ENCODE measurements at regions of chr2 and their contacts with region 1.

Region 1: DNA sequence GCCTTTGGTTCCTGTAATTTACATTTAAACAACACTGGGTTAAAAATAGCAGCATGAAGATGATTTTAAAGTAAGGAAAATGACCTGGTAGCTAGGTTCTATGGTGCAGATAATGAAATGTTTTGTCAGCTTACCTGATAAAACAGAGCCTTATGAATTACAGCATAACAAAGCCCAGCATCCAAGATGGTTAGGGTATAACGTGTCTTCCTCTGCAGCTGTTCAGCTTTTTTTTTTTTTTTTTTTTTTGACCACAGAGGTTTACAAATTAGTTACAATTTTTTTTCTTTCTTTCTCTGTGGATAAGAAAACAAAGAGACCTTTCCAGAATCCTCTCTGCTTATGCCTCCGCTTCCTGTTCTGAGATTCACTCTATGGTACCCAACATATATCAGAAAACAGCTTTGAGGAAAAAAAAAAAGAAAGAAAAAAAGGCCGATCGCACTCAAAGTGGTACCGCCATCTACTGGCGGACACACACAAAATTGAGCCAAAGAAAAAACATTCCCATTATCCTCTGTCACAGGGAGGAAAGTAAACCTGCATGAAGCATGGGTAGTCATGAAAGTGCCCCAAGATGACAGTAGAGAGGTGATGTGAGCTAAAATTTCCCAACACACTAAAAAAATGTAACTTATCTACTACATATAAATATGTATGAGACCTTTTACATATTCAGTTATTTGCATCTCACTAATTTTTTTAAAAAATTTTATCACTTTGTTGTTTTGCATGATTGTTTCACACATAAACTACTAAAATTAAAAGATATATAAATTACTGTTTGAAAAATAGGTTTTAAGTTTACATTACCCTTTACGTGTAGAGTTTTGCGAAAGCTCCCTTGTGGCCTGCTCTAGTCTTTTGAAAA is at the start of gene SCN3A:
- DNase-seq: peak; percentile 45
- ATAC-seq: peak; percentile 37; the same call in 1 of the 2 replicates
- H3K4me3 ChIP-seq: no peak within 1 kb of the TSS
- H3K27ac ChIP-seq: no peak within 1 kb of the TSS
- H3K4me1 ChIP-seq: no peaks in the 10 kb centered on the region
- H3K27me3 ChIP-seq: no peaks in the 10 kb centered on the region; the same call in 1 of the 2 replicates
- CTCF ChIP-seq: peak; percentile 82
- POLR2A ChIP-seq: no peak
- RAD21 ChIP-seq: peak; percentile 75
- total RNA-seq, gene SCN3A: 0.90 and 1.4 TPM in 2 replicates

Region 2: GRCh38 chr2:165015052-165015642 is 188.8 kb before region 1 on chr2:
- CTCF ChIA-PET with region 1: interaction called, 99 read pairs
- POLR2A ChIA-PET with region 1: interaction called, 6 read pairs
- dilution Hi-C with region 1: no loop called
- in situ Hi-C with region 1: loop called (anchors 5 kb)
- intact Hi-C with region 1: loop called (anchors 1 kb)
- DNase-seq: peak; percentile 59
- ATAC-seq: peak; percentile 82
- H3K4me3 ChIP-seq: no peak overlapping the region
- H3K27ac ChIP-seq: no peak overlapping the region
- H3K4me1 ChIP-seq: no peaks in the 10 kb centered on the region
- H3K27me3 ChIP-seq: peaks cover 3% of the 10 kb centered on the region; the same call in 1 of the 2 replicates
- CTCF ChIP-seq: peak; percentile 82
- POLR2A ChIP-seq: no peak
- RAD21 ChIP-seq: peak; percentile 61

Region 3: DNA sequence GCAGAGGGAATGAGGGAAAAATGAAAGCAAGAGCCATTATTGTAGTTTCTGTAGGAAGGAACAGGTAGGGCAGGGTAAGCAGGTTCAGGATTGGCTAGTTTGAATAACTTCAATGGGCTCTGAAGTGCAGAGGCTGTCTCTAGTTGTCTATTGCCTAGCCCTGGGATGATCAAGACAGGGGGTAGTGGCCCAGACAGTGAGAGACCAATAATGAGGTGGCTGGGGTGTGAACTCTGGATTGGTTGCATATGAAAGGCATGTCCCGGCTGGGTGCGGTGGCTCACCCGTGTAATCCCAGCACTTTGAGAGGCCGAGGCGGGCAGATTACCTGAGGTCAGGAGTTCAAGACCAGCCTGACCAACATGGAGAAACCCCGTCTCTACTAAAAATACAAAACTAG is 181.1 kb before region 1 on chr2:
- CTCF ChIA-PET with region 1: interaction called, 99 read pairs
- POLR2A ChIA-PET with region 1: no interaction called
- dilution Hi-C with region 1: no loop called
- in situ Hi-C with region 1: loop called (anchors 5 kb)
- intact Hi-C with region 1: no loop called
- DNase-seq: no peak
- ATAC-seq: no peak
- H3K4me3 ChIP-seq: no peak overlapping the region
- H3K27ac ChIP-seq: no peak overlapping the region
- H3K4me1 ChIP-seq: no peaks in the 10 kb centered on the region
- H3K27me3 ChIP-seq: peaks cover 4% of the 10 kb centered on the region
- CTCF ChIP-seq: no peak
- POLR2A ChIP-seq: no peak
- RAD21 ChIP-seq: no peak

Region 4: GRCh38 chr2:165141601-165142354 is 62.1 kb before region 1 on chr2:
- CTCF ChIA-PET with region 1: interaction called, 3 read pairs
- POLR2A ChIA-PET with region 1: no interaction called
- dilution Hi-C with region 1: no loop called
- in situ Hi-C with region 1: no loop called
- intact Hi-C with region 1: loop called (anchors 2 kb)
- DNase-seq: peak; percentile 3
- ATAC-seq: no peak
- H3K4me3 ChIP-seq: no peak overlapping the region
- H3K27ac ChIP-seq: no peak overlapping the region
- H3K4me1 ChIP-seq: no peaks in the 10 kb centered on the region
- H3K27me3 ChIP-seq: no peaks in the 10 kb centered on the region
- CTCF ChIP-seq: peak; percentile 35
- POLR2A ChIP-seq: no peak
- RAD21 ChIP-seq: no peak; the same call in 1 of the 2 replicates

Region 5: GRCh38 chr2:165499131-165499530 is 295.2 kb after region 1 on chr2:
- CTCF ChIA-PET with region 1: no interaction called
- POLR2A ChIA-PET with region 1: no interaction called
- dilution Hi-C with region 1: no loop called
- in situ Hi-C with region 1: no loop called
- intact Hi-C with region 1: no loop called
- DNase-seq: no peak
- ATAC-seq: no peak
- H3K4me3 ChIP-seq: no peak overlapping the region
- H3K27ac ChIP-seq: no peak overlapping the region
- H3K4me1 ChIP-seq: no peaks in the 10 kb centered on the region
- H3K27me3 ChIP-seq: no peaks in the 10 kb centered on the region
- CTCF ChIP-seq: no peak
- POLR2A ChIP-seq: no peak
- RAD21 ChIP-seq: no peak